ENCODE measurements at regions of chr9 and their contacts with region 1.

Region 1: DNA sequence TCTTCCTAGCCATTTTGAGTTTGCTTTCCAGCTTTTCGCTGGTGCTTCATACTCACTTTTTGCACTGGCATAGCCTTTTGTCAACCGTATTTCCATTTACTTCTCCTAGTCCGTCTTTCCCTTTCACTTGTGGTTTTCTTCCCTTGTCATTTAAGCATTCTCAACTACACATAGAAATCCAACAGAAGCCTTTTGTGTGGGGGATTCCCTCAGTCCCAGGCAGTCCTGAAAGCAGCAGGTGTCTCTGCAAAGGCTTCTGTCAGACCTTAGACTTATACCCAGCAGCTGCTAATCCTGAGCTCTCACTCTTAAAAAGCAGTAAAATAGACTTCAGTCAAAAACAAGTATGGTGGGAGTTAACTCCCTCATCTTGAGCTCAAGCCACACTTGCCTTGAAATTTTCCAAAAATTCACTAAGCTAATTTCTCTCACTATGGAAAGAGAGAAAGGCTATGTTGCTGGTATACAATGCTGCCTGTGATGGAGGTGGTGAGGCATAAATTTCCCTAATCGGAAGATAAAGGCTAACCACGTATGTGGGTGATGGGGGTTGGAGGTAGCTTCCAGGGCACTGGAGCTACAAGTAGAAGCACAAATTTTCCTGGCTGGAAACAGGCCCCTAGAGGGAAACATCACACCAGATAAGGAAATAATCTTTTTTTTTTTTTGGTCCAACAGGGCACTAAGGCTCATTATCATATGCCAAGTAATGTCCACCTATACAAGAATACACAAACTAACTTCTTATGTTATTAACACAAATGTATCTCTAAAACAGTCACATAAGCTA is 34.8 kb upstream of the IFNK start:
- DNase-seq: peak; percentile 36
- ATAC-seq: no peak
- H3K4me3 ChIP-seq: no peak overlapping the region
- H3K4me3 Mint-ChIP-seq: peak overlapping the region; percentile 63
- H3K27ac ChIP-seq: peak overlapping the region; percentile 28 to 60
- H3K27ac Mint-ChIP-seq: peak overlapping the region; percentile 72
- H3K4me1 ChIP-seq: peaks cover 74 to 83% of the 10 kb centered on the region in 2 donors
- H3K4me1 Mint-ChIP-seq: peaks cover 76% of the 10 kb centered on the region
- H3K27me3 ChIP-seq: no peaks in the 10 kb centered on the region
- H3K27me3 Mint-ChIP-seq: no peaks in the 10 kb centered on the region
- CTCF ChIP-seq: no peak

Region 2: DNA sequence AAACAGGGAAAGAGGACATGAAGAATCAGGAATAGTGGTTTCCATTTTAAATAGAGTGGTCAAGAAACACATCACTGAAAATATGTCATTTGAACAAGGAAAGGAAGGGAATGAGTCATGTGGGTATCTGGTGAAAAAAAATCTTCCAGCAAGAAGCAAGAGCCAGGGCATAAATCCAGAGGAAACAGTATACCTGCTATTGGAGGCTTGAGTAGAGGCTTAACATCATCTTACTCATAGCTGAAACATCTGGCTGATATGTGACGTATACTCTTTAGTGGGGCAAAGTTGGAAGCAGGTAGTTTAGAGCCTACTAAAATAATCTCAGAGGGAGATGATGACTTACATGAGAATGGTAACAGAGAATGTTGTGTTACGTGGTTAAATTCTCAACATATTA is 1113.8 kb before region 1 on chr9:
- CTCF ChIA-PET with region 1: no interaction called
- POLR2A ChIA-PET with region 1: no interaction called
- intact Hi-C with region 1: no loop called
- DNase-seq: no peak
- ATAC-seq: no peak
- H3K4me3 ChIP-seq: no peak overlapping the region
- H3K4me3 Mint-ChIP-seq: no peak overlapping the region
- H3K27ac ChIP-seq: no peak overlapping the region
- H3K27ac Mint-ChIP-seq: no peak overlapping the region
- H3K4me1 ChIP-seq: no peaks in the 10 kb centered on the region
- H3K4me1 Mint-ChIP-seq: no peaks in the 10 kb centered on the region
- H3K27me3 ChIP-seq: no peaks in the 10 kb centered on the region
- H3K27me3 Mint-ChIP-seq: no peaks in the 10 kb centered on the region
- CTCF ChIP-seq: no peak

Region 3: GRCh38 chr9:27053369-27054022 is 435.8 kb before region 1 on chr9:
- CTCF ChIA-PET with region 1: no interaction called
- POLR2A ChIA-PET with region 1: no interaction called
- intact Hi-C with region 1: no loop called
- DNase-seq: no peak
- ATAC-seq: no peak
- H3K4me3 ChIP-seq: no peak overlapping the region
- H3K4me3 Mint-ChIP-seq: no peak overlapping the region
- H3K27ac ChIP-seq: no peak overlapping the region
- H3K27ac Mint-ChIP-seq: no peak overlapping the region
- H3K4me1 ChIP-seq: no peaks in the 10 kb centered on the region
- H3K4me1 Mint-ChIP-seq: no peaks in the 10 kb centered on the region
- H3K27me3 ChIP-seq: no peaks in the 10 kb centered on the region
- H3K27me3 Mint-ChIP-seq: no peaks in the 10 kb centered on the region
- CTCF ChIP-seq: no peak

Region 4: GRCh38 chr9:27377147-27377807 is 112.0 kb before region 1 on chr9:
- CTCF ChIA-PET with region 1: no interaction called
- POLR2A ChIA-PET with region 1: interaction called, 3 read pairs
- intact Hi-C with region 1: loop called (anchors 5 kb)
- DNase-seq: no peak
- ATAC-seq: no peak
- H3K4me3 ChIP-seq: peak overlapping the region in 4 of 5 experiments; percentile 8 to 51 (median 28)
- H3K4me3 Mint-ChIP-seq: peak overlapping the region; percentile 74
- H3K27ac ChIP-seq: peak overlapping the region; percentile 81 to 85
- H3K27ac Mint-ChIP-seq: peak overlapping the region; percentile 85
- H3K4me1 ChIP-seq: peaks cover 64 to 72% of the 10 kb centered on the region in 2 donors
- H3K4me1 Mint-ChIP-seq: peaks cover 68% of the 10 kb centered on the region
- H3K27me3 ChIP-seq: no peaks in the 10 kb centered on the region
- H3K27me3 Mint-ChIP-seq: no peaks in the 10 kb centered on the region
- CTCF ChIP-seq: no peak

Region 5: DNA sequence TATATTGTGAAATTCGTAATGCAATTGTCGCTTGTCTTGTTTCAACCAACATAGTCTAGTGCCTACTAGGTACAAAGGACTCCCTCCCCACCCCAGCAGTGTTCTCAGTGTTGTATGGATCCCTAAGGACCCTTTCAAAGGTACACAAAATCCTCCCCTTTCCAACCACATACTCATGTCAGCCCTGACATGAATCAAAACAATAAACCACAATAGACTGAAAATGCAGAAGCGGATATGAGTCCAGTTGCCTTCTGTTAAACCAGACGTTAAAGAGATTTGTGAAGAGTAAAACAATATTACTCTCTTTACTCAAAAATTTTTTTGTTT is 47.6 kb before region 1 on chr9:
- CTCF ChIA-PET with region 1: interaction called, 4 read pairs
- POLR2A ChIA-PET with region 1: no interaction called
- intact Hi-C with region 1: loop called (anchors 2 kb)
- DNase-seq: peak; percentile 51
- ATAC-seq: peak; percentile 95
- H3K4me3 ChIP-seq: peak overlapping the region in 1 of 5 experiments; percentile 21
- H3K4me3 Mint-ChIP-seq: peak overlapping the region; percentile 70
- H3K27ac ChIP-seq: peak overlapping the region; percentile 15 to 42
- H3K27ac Mint-ChIP-seq: peak overlapping the region; percentile 87
- H3K4me1 ChIP-seq: peaks cover 50 to 53% of the 10 kb centered on the region in 2 donors
- H3K4me1 Mint-ChIP-seq: peaks cover 70% of the 10 kb centered on the region
- H3K27me3 ChIP-seq: no peaks in the 10 kb centered on the region
- H3K27me3 Mint-ChIP-seq: no peaks in the 10 kb centered on the region
- CTCF ChIP-seq: no peak

Region 6: DNA sequence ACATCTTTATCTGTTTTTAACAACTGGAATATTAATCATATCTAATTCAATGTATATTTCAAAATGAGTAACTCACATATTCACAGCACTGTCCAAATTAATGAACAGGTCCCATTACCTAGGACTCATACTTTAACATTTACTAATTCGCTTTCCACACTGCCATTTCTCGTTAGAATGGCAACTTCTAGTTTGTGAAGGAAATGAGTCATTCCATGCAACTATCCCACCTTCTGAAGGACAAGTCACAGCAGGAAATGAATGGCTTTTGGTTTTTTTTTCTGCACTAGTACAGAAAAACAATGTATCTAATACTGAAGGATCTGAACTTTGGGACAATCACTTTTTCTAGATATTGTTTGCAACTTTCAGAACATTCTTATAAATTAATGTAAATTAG is 10.2 kb after region 1 on chr9:
- CTCF ChIA-PET with region 1: no interaction called
- POLR2A ChIA-PET with region 1: no interaction called
- intact Hi-C with region 1: loop called (anchors 2 kb)
- DNase-seq: no peak
- ATAC-seq: no peak
- H3K4me3 ChIP-seq: no peak overlapping the region
- H3K4me3 Mint-ChIP-seq: no peak overlapping the region
- H3K27ac ChIP-seq: no peak overlapping the region
- H3K27ac Mint-ChIP-seq: no peak overlapping the region
- H3K4me1 ChIP-seq: peaks cover 16 to 22% of the 10 kb centered on the region in 2 donors
- H3K4me1 Mint-ChIP-seq: peaks cover 70% of the 10 kb centered on the region
- H3K27me3 ChIP-seq: no peaks in the 10 kb centered on the region
- H3K27me3 Mint-ChIP-seq: no peaks in the 10 kb centered on the region
- CTCF ChIP-seq: no peak